ENCODE measurements at regions of chr1 and their contacts with region 1.

Region 1: DNA sequence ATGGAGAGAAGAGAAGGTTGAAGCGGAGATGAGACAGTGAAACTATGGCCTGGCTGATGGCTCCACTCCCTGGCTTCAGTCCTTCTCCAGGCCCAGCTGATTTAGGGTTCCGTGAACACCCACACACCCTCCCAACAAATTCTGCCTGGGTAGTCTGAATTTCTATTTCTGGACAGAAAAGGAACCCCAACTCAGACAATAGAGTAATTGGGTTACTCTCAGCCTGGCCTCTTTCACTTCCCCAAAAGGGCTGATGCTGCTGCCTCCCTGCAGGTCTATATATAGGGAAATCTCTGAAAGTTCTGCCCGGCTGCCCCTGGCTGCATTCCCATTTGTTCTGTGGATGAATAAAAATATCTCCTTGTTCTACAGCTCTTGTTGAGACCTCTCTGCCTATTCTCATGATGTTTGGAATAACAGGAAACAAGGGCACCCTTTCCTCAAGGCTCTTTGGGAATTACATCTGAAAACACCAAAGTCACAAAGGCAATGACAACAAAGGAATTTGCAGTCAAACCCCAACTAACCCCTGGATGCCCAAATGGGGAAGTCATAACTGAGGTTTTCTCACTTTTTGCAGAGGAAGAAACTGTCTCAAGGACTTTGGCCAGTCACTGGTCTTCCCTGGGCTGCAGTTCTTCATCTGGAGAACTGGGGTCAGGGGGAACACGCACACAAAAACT is 11.4 kb upstream of the ZSCAN20 start:
- DNase-seq: peak; percentile 67 to 86 (median 75)
- H3K4me3 ChIP-seq: peak overlapping the region in 1 of 3 experiments; percentile 51
- H3K4me3 Mint-ChIP-seq: peak overlapping the region; percentile 35 to 56
- H3K27ac ChIP-seq: peak overlapping the region; percentile 63 to 81
- H3K27ac Mint-ChIP-seq: peak overlapping the region; percentile 81 to 95 (median 90)
- H3K4me1 ChIP-seq: peaks cover 54 to 57% of the 10 kb centered on the region in 2 donors
- H3K4me1 Mint-ChIP-seq: peaks cover 58% of the 10 kb centered on the region
- H3K27me3 ChIP-seq: no peaks in the 10 kb centered on the region
- H3K27me3 Mint-ChIP-seq: peaks cover 0 to 11% (median 0%) of the 10 kb centered on the region in 3 donors
- CTCF ChIP-seq: no peak

Region 2: DNA sequence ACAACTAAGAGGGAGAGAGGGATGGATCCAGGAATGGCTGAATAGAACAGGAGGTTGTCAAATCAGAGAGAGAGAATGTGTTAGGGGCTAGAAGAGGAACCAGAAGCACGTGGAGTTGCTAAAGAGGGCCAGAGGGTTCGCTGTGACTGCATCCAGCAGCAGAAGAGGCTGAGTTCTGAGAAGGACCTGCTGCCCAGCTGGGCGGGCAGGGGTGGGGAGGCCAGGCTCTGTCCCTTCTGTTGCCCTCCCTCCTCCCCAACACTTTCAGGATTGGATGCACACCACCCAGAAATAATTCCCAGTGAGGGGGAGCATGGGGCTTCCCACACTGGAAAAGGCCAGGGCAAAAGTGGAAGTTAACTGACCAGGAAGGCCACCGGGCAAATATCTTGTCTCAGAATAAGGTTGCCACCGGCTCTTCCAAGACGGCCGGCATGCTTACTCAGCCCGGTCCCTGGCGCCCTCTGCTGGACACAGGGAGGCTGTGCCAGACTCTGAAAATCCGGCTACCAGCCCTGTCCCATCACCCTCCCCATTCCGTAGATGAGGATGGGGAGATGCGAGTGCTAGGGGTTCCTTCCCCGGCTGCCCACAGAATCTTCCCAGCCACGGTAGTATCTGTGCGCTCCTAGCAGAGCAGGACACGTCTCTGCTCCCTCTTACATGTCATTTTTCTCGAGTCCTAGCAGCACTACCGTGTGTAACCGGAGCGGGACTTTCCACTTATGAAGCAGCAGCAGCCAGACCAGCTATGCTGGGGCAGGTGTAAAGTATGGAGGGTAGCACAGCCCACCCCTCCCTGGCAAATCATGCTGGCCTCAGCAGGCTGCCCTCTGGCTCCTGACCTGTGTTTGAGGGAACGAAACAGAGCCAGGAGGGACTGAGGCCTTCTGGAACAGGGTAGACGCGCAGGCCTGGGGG is 93.3 kb before region 1 on chr1:
- intact Hi-C with region 1: loop called in 1 of 2 experiments (anchors 10 kb)
- DNase-seq: peak; percentile 71 to 83 (median 80)
- H3K4me3 ChIP-seq: no peak overlapping the region
- H3K4me3 Mint-ChIP-seq: peak overlapping the region in 1 of 2 donors; percentile 60
- H3K27ac ChIP-seq: no peak overlapping the region
- H3K27ac Mint-ChIP-seq: peak overlapping the region in 5 of 7 donors; percentile 45 to 82 (median 65)
- H3K4me1 ChIP-seq: peaks cover 12 to 13% of the 10 kb centered on the region in 2 donors
- H3K4me1 Mint-ChIP-seq: peaks cover 16% of the 10 kb centered on the region
- H3K27me3 ChIP-seq: no peaks in the 10 kb centered on the region
- H3K27me3 Mint-ChIP-seq: peaks cover 0 to 4% (median 3%) of the 10 kb centered on the region in 3 donors
- CTCF ChIP-seq: peak; percentile 96

Region 3: DNA sequence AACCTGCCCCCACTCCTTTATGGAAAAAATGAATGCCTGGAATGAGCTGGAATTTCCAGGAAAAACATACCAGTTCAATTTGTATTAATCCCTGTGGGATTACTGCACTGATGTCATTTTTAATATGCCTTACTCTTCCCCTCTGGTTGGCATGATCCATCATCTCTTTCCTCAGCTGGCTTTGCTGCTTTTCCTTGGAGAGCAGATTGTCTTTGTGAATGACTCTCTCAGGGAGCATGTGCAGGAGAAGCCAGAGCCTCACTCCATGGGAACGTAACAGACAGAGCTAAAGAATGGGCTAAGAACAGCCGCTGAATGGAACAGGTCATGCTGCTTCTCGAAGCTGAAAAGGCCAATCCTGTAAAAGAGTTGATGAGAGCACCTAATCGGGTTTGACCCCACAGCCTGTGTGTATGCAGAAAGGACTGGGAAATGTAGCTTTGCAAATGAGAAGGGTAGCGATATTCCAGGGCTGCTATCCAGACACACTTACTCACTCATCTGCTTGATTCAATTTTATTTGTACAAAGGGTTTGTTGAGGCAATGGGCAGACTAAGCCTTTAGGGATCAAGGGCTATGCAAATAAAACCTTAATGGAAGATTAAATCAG is 50.9 kb before region 1 on chr1:
- intact Hi-C with region 1: loop called in 1 of 2 experiments (anchors 2 kb)
- DNase-seq: no peak
- H3K4me3 ChIP-seq: no peak overlapping the region
- H3K4me3 Mint-ChIP-seq: no peak overlapping the region
- H3K27ac ChIP-seq: no peak overlapping the region
- H3K27ac Mint-ChIP-seq: no peak overlapping the region
- H3K4me1 ChIP-seq: no peaks in the 10 kb centered on the region
- H3K4me1 Mint-ChIP-seq: no peaks in the 10 kb centered on the region
- H3K27me3 ChIP-seq: no peaks in the 10 kb centered on the region
- H3K27me3 Mint-ChIP-seq: no peaks in the 10 kb centered on the region
- CTCF ChIP-seq: no peak

Measured in CD14-positive monocyte (primary cell).